ENCODE measurements at regions of chr3 and their contacts with region 1.

Region 1: GRCh38 chr3:117019082-117019713 is 309.6 kb downstream of the TUSC7 start:
- DNase-seq: peak; percentile 73
- H3K4me3 ChIP-seq: no peak overlapping the region
- H3K27ac ChIP-seq: no peak overlapping the region
- H3K4me1 ChIP-seq: no peaks in the 10 kb centered on the region
- H3K27me3 ChIP-seq: no peaks in the 10 kb centered on the region
- CTCF ChIP-seq: peak; percentile 81

Region 2: DNA sequence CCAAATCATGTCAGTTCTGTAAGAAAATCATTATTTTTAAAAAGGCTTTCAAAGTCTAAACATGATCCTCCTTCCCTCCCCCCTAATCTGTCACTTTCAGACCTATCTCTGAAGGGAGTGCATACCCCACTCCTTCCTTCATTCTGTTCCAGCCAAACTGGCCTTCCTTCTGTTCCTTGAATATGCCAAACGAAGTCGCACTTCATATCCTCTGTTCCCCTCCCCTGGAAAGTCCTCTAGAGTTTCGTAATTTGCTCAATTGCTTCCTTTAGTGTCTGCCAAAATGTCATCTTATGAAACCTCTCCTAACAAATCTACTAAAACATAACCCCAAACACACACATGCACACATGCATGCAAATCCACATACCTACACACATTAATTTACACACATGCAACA is 379.1 kb before region 1 on chr3:
- CTCF ChIA-PET with region 1: no interaction called
- POLR2A ChIA-PET with region 1: no interaction called
- intact Hi-C with region 1: no loop called
- DNase-seq: no peak
- H3K4me3 ChIP-seq: no peak overlapping the region
- H3K27ac ChIP-seq: no peak overlapping the region
- H3K4me1 ChIP-seq: no peaks in the 10 kb centered on the region
- H3K27me3 ChIP-seq: no peaks in the 10 kb centered on the region
- CTCF ChIP-seq: no peak

Region 3: DNA sequence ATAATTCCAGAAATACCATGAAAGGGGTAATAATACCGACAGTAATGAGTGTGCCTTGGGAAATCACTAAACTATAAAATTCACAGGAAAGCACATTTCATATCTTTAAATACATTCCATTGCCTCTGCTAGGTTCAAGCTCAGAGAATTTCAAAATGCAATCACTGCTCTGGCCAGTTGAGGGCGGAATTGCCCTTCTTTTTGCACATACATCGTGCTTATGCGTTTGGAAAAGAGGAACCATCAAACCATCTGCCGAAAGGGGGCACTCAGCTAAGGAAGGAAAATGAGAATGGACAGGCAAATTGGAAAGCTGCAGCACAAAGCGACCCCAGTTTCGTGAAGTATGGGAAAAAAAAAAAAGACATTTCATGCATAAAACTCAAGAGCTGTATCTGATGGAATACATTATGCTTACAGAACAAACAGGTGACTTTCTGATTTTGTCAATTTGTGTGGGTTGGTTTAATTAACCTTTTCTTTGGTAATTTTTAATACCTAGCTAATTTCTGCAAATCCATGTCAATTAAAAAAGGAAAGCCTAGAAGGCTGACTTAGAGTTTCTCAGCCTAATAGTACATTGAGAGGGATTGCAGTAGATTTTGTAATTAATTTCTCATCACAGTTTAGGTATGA is 248.3 kb before region 1 on chr3:
- CTCF ChIA-PET with region 1: interaction called, 4 read pairs
- POLR2A ChIA-PET with region 1: no interaction called
- intact Hi-C with region 1: loop called (anchors 5 kb)
- DNase-seq: peak; percentile 91
- H3K4me3 ChIP-seq: no peak overlapping the region
- H3K27ac ChIP-seq: no peak overlapping the region
- H3K4me1 ChIP-seq: no peaks in the 10 kb centered on the region
- H3K27me3 ChIP-seq: no peaks in the 10 kb centered on the region
- CTCF ChIP-seq: peak; percentile 99

Region 4: GRCh38 chr3:117355566-117355965 is 336.4 kb after region 1 on chr3:
- CTCF ChIA-PET with region 1: no interaction called
- POLR2A ChIA-PET with region 1: no interaction called
- intact Hi-C with region 1: loop called (anchors 5 kb)
- DNase-seq: peak; percentile 69
- H3K4me3 ChIP-seq: no peak overlapping the region
- H3K27ac ChIP-seq: no peak overlapping the region
- H3K4me1 ChIP-seq: peaks cover 2% of the 10 kb centered on the region
- H3K27me3 ChIP-seq: no peaks in the 10 kb centered on the region
- CTCF ChIP-seq: peak; percentile 57

Region 5: DNA sequence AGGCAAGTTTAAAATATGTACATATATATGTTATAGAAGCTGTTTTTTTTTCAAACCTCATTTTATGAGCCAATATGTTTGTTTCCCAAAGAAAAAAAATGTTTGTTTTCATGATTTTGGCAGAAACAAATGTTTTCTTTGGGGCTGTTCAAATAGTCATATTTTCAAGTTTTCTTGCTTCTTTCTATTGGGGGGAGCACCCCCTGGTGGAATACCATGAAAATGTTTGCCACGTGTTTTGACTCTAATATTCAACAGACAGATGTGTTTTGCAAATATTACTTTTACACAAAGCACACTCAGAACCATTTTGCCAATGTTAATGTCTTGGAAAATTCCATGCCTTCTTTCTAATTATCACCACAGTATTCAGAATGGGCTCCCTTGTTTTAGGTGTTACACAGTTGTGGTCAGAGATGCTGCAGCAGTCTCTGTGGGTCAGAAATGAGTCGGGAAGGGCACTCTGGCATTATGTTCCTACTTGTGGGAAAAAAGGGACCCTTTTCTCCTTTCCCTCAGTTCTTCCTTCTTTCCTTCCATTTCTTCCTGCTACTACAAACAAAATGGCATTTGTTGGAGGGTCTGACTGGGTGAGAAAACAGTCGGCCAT is 507.4 kb after region 1 on chr3:
- CTCF ChIA-PET with region 1: no interaction called
- POLR2A ChIA-PET with region 1: interaction called, 3 read pairs
- intact Hi-C with region 1: loop called (anchors 5 kb)
- DNase-seq: peak; percentile 37
- H3K4me3 ChIP-seq: no peak overlapping the region
- H3K27ac ChIP-seq: no peak overlapping the region
- H3K4me1 ChIP-seq: no peaks in the 10 kb centered on the region
- H3K27me3 ChIP-seq: no peaks in the 10 kb centered on the region
- CTCF ChIP-seq: peak; percentile 69

Region 6: GRCh38 chr3:117719316-117719926 is 700.2 kb after region 1 on chr3:
- CTCF ChIA-PET with region 1: no interaction called
- POLR2A ChIA-PET with region 1: no interaction called
- intact Hi-C with region 1: loop called (anchors 5 kb)
- DNase-seq: peak; percentile 37
- H3K4me3 ChIP-seq: no peak overlapping the region
- H3K27ac ChIP-seq: no peak overlapping the region
- H3K4me1 ChIP-seq: no peaks in the 10 kb centered on the region
- H3K27me3 ChIP-seq: no peaks in the 10 kb centered on the region
- CTCF ChIP-seq: peak; percentile 82